Sigmoid colon (tissue), 7 donors: ENCODE measurements at regions of chrX and their contacts with region 1.

Region 1: GRCh38 chrX:130079824-130080406 is 30.4 kb downstream of the ELF4 start:
- DNase-seq: peak; percentile 83
- H3K4me3 ChIP-seq: no peak overlapping the region
- H3K27ac ChIP-seq: no peak overlapping the region
- H3K4me1 ChIP-seq: peaks cover 0 to 17% (median 8%) of the 10 kb centered on the region in 4 donors
- H3K27me3 ChIP-seq: no peaks in the 10 kb centered on the region
- CTCF ChIP-seq: peak; percentile 13 to 54 (median 52)
- EP300 ChIP-seq: no peak
- POLR2A ChIP-seq: no peak

Region 2: GRCh38 chrX:130120746-130121504 is 41.0 kb after region 1 on chrX:
- intact Hi-C with region 1: loop called (anchors 2 kb)
- DNase-seq: peak; percentile 89
- H3K4me3 ChIP-seq: peak overlapping the region; percentile 16 to 46 (median 38)
- H3K27ac ChIP-seq: peak overlapping the region; percentile 65 to 81 (median 74)
- H3K4me1 ChIP-seq: peaks cover 0 to 48% (median 25%) of the 10 kb centered on the region in 4 donors
- H3K27me3 ChIP-seq: no peaks in the 10 kb centered on the region
- CTCF ChIP-seq: peak; percentile 57 to 66 (median 62)
- EP300 ChIP-seq: no peak
- POLR2A ChIP-seq: no peak

Region 3: GRCh38 chrX:130170752-130171445 is 91.0 kb after region 1 on chrX:
- intact Hi-C with region 1: loop called (anchors 5 kb)
- DNase-seq: no peak
- H3K4me3 ChIP-seq: peak overlapping the region; percentile 13 to 50 (median 44)
- H3K27ac ChIP-seq: peak overlapping the region in 1 of 4 donors; percentile 33
- H3K4me1 ChIP-seq: peaks cover 2 to 21% (median 9%) of the 10 kb centered on the region in 4 donors
- H3K27me3 ChIP-seq: no peaks in the 10 kb centered on the region
- CTCF ChIP-seq: no peak
- EP300 ChIP-seq: no peak
- POLR2A ChIP-seq: no peak

Region 4: GRCh38 chrX:130196466-130196865 is 116.6 kb after region 1 on chrX:
- intact Hi-C with region 1: loop called (anchors 1 kb)
- DNase-seq: no peak
- H3K4me3 ChIP-seq: no peak overlapping the region
- H3K27ac ChIP-seq: no peak overlapping the region
- H3K4me1 ChIP-seq: no peaks in the 10 kb centered on the region
- H3K27me3 ChIP-seq: no peaks in the 10 kb centered on the region
- CTCF ChIP-seq: no peak
- EP300 ChIP-seq: no peak
- POLR2A ChIP-seq: no peak